Ascending aorta (tissue), 2 donors: ENCODE measurements at regions of chr1 and their contacts with region 1.

Region 1: DNA sequence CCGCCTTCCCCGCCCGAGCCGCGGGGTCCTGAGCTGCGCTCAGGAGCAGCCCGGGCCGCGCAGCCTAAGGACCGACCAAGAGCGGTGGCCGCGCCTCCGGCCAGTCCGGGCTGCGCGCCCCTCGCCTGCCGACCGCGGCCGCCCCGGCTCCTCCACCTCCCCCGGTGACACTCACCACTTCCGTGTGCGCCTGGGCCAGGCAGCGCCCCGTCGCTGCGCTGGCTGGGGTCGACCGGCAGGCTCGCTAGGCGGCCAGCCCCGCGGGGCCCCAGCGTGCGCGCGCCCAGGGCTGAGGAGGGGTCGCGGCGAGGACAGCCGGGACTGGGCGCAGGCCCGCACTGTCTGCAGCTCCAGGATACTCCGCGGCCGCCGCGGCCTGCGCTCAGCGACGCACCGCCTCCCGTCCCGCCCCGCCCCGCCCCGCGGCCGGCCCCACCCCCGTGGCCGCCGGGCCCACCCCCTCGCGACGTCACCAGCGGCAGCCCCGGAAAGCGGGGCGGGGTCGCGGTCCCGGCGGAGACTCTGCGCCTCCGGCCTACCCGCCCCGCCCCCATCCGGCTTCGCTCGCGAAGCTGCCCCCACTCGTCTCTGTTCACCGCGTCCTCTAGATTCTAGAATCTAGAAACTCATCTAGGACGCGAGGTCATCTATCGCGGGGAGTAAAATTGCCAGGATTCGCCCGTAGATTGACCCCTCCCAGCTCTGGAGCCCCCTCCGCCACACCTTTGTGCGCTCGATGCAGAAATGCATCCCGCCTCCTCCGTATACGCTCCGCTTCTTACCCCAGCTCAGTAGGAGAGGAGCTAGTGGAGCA is at the start of gene JAK1:
- DNase-seq: peak in 1 of 2 donors; percentile 87
- H3K4me3 ChIP-seq: peak within 1 kb of the TSS; percentile 76 to 98
- H3K27ac ChIP-seq: peak within 1 kb of the TSS; percentile 94 to 97
- H3K4me1 ChIP-seq: peaks cover 0 to 6% of the 10 kb centered on the region in 2 donors
- H3K27me3 ChIP-seq: no peaks in the 10 kb centered on the region
- CTCF ChIP-seq: no peak
- total RNA-seq, gene JAK1: 53.5 TPM

Region 2: DNA sequence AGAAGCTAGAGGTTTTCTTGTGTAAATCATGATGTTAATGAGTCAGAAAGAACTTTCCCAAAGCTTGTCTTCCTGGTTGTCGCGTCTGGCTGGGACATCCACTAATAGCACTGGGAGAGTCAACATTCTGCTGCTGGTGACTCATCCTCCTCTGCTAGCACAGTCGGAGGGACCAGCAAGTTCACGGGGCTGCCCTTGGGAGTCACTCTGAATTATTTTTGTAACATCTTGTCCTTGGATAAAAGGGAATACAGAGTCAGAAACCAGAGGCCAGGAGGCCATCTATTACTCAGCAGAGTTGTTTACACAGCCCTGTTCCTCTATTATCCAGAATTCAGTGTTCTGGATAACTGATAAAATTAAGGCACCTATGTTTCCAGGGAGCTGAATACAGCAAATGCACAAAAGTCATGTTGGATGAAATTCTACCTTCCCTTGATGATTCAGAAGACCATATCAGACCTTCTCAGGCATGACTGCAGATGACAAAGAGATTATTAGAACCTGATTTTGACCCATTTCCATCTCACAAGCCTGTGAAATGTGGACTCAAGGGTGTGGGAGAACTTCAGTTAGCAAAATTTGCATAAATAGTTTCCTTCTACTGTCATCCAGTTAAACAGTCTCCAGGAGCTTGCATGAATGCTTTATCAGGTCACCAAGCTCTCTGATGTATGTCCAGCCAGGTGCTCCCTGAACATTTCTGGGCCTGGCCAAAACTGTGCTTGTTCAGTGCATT is 68.1 kb before region 1 on chr1:
- intact Hi-C with region 1: loop called (anchors 1 kb)
- DNase-seq: peak; percentile 92 to 96
- H3K4me3 ChIP-seq: peak overlapping the region; percentile 24 to 31
- H3K27ac ChIP-seq: peak overlapping the region; percentile 79 to 86
- H3K4me1 ChIP-seq: peaks cover 4 to 23% of the 10 kb centered on the region in 2 donors
- H3K27me3 ChIP-seq: no peaks in the 10 kb centered on the region
- CTCF ChIP-seq: no peak